Endothelial cell of umbilical vein (primary cell): ENCODE measurements at regions of chr12 and their contacts with region 1.

Region 1: DNA sequence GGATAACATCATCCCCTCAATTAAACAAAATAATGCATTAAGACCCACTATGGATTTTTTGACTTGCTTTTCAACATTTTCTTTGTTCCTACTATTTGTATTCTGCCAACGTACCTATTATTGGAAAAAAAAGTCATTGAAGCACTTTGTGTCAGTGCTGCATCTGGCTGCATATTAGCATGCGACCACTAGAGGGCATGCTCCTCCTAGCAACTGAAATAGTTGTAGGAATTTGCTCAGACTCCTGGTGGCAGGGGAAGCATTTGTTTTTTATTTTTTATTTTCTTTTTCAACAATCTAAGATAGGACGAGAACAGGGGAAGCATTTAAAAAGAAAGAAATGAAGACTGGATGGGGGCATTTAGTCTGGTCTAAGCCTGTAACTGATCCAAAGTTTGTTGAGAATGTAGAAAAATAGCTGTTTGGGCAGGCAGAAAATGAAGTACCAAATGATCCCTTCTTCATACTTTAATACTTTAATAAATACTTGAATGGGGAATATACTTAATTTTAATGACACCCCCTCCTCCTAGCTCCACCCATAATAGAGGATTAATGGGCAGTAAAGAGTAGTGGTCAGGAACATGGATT is 14.5 kb upstream of the CLEC4A start:
- DNase-seq: peak; percentile 85
- H3K4me3 ChIP-seq: no peak overlapping the region
- H3K27ac ChIP-seq: no peak overlapping the region
- H3K4me1 ChIP-seq: no peaks in the 10 kb centered on the region
- H3K27me3 ChIP-seq: no peaks in the 10 kb centered on the region
- CTCF ChIP-seq: peak; percentile 80 to 94
- POLR2A ChIP-seq: no peak

Region 2: GRCh38 chr12:7681535-7681934 is 427.4 kb before region 1 on chr12:
- CTCF ChIA-PET with region 1: no interaction called
- POLR2A ChIA-PET with region 1: no interaction called
- dilution Hi-C with region 1: no loop called
- intact Hi-C with region 1: no loop called
- DNase-seq: no peak
- H3K4me3 ChIP-seq: no peak overlapping the region
- H3K27ac ChIP-seq: no peak overlapping the region
- H3K4me1 ChIP-seq: peaks cover 3% of the 10 kb centered on the region
- H3K27me3 ChIP-seq: peaks cover 0 to 6% of the 10 kb centered on the region in 2 experiments
- CTCF ChIP-seq: no peak
- POLR2A ChIP-seq: no peak

Region 3: GRCh38 chr12:7970475-7971252 is 138.2 kb before region 1 on chr12:
- CTCF ChIA-PET with region 1: no interaction called
- POLR2A ChIA-PET with region 1: no interaction called
- dilution Hi-C with region 1: no loop called
- intact Hi-C with region 1: no loop called
- DNase-seq: peak; percentile 94
- H3K4me3 ChIP-seq: peak overlapping the region; percentile 5 to 41 (median 40)
- H3K27ac ChIP-seq: peak overlapping the region; percentile 60
- H3K4me1 ChIP-seq: peaks cover 17% of the 10 kb centered on the region
- H3K27me3 ChIP-seq: no peaks in the 10 kb centered on the region
- CTCF ChIP-seq: no peak
- POLR2A ChIP-seq: peak; percentile 59

Region 4: DNA sequence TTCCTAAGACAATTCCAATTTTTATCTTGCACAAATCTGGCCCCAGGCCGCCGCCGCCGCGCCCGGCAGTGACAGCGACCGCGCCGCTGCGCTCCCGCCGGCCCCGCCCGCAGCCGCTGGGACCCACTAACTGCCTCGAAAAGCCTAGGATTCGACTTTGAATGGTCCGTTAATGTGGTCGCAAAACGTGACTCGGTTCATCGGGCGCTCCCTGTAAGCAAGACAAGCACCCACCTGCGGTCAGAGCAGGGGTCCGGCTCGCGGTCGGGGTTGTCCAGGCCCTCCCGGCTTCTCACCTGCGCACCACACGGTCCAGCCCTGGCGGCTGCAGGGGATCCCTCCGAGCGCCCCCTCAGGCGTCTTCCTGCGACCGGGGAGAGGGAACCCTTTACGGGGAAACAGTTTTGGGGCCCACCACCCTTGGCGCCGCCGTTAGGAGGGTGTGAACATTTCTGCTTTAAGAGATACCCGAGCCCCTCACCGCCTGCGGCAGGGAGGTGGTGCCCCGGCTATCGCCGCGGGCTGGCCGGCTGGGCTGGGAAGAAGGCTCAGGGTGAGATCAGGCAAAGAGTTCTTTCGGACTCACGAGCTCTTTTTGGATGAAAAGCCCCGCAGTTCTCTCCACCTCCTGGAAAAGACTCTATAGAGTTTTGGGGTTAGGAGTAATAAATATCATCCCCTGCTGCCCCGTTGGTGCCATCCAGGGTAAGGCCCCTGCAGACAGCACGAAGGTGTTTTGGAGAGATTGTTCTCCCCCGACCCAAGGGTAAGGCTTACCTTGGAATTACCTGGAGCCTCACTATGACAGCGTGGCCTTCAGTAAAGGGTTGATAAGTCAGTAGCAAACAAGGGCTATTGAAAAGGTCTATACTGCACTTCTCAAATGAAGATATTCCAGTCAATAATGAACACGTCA is 90.0 kb before region 1 on chr12:
- CTCF ChIA-PET with region 1: no interaction called
- POLR2A ChIA-PET with region 1: no interaction called
- dilution Hi-C with region 1: no loop called
- intact Hi-C with region 1: no loop called
- DNase-seq: no peak
- H3K4me3 ChIP-seq: peak overlapping the region in 1 of 3 experiments; percentile 9
- H3K27ac ChIP-seq: no peak overlapping the region
- H3K4me1 ChIP-seq: no peaks in the 10 kb centered on the region
- H3K27me3 ChIP-seq: peaks cover 27 to 41% of the 10 kb centered on the region in 2 experiments
- CTCF ChIP-seq: no peak
- POLR2A ChIP-seq: no peak

Region 5: DNA sequence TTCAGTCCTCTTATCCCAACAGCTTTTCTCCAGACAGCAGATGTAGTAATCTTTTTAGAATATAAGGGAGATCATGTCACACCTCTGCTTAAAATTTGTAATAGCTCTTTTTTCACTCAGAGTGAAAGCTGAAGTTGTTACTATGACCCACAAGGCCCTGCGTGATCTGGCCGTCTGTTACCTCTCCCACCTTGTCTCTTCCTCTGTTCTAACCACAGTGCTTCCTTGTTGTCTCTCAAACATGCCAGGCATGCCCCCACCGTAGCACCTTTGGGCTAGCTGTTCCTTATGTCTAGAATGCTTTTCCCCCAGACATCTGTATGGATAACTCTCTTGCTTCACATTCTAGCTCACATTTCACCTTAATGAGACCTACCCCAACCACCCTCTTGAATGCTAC is 20.3 kb before region 1 on chr12:
- CTCF ChIA-PET with region 1: interaction called, 11 read pairs
- POLR2A ChIA-PET with region 1: no interaction called
- dilution Hi-C with region 1: no loop called
- intact Hi-C with region 1: no loop called
- DNase-seq: no peak
- H3K4me3 ChIP-seq: no peak overlapping the region
- H3K27ac ChIP-seq: no peak overlapping the region
- H3K4me1 ChIP-seq: no peaks in the 10 kb centered on the region
- H3K27me3 ChIP-seq: no peaks in the 10 kb centered on the region
- CTCF ChIP-seq: no peak
- POLR2A ChIP-seq: no peak

Region 6: DNA sequence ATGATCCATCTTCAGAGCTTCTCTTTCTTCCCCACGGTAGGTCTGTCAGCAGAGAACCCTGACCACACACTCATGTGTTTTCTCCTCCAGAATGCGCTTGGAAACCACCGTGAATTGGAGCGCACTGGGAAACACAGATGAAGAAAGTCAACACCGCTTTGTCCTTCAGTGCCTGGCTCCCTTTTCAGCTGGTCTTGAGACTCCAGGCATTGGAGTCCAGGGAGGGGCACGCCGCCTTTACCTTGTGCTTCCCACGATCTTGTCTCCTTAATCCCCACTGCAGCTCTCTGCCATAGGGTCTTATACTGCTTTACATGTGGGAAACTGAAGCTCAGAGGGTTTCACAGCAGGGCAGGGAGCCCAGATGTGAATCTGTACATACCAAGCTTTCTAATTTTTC is 117.5 kb after region 1 on chr12:
- CTCF ChIA-PET with region 1: interaction called, 84 read pairs
- POLR2A ChIA-PET with region 1: no interaction called
- dilution Hi-C with region 1: no loop called
- intact Hi-C with region 1: loop called (anchors 1 kb)
- DNase-seq: no peak
- H3K4me3 ChIP-seq: no peak overlapping the region
- H3K27ac ChIP-seq: no peak overlapping the region
- H3K4me1 ChIP-seq: no peaks in the 10 kb centered on the region
- H3K27me3 ChIP-seq: no peaks in the 10 kb centered on the region
- CTCF ChIP-seq: no peak
- POLR2A ChIP-seq: no peak

Region 7: DNA sequence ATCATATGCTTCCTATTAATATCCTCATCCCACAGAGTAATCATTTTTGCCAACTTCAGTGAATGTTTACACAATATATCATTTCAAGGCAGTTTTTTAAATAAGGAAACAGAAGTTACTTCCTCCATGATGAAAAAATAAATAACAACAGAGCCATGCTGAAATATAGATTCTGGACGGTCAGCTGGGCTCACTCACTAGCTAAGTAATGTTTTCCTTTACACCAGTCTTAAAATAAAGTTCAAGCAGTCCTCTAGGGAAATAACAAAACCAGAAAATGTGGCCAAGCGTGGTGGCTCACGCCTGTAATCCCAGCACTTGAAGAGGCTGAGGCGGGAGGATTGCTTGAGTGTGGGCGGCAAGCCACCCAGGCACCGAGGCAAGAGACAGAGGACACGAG is 475.1 kb after region 1 on chr12:
- CTCF ChIA-PET with region 1: no interaction called
- POLR2A ChIA-PET with region 1: no interaction called
- dilution Hi-C with region 1: no loop called
- intact Hi-C with region 1: no loop called
- DNase-seq: no peak
- H3K4me3 ChIP-seq: no peak overlapping the region
- H3K27ac ChIP-seq: no peak overlapping the region
- H3K4me1 ChIP-seq: no peaks in the 10 kb centered on the region
- H3K27me3 ChIP-seq: no peaks in the 10 kb centered on the region
- CTCF ChIP-seq: no peak
- POLR2A ChIP-seq: no peak